Left ventricle myocardium inferior (tissue), 1 donor: ENCODE measurements at regions of chr12 and their contacts with region 1.

Region 1: GRCh38 chr12:9827209-9827888 is at the start of gene KLRF1:
- DNase-seq: no peak
- H3K4me3 ChIP-seq: no peak within 1 kb of the TSS
- H3K27ac ChIP-seq: no peak within 1 kb of the TSS
- H3K4me1 ChIP-seq: no peaks in the 10 kb centered on the region
- H3K27me3 ChIP-seq: no peaks in the 10 kb centered on the region
- CTCF ChIP-seq: no peak
- total RNA-seq, gene KLRF1: not detected

Region 2: GRCh38 chr12:9694241-9694640 is 133.1 kb before region 1 on chr12:
- intact Hi-C with region 1: no loop called
- DNase-seq: no peak
- H3K4me3 ChIP-seq: no peak overlapping the region
- H3K27ac ChIP-seq: no peak overlapping the region
- H3K4me1 ChIP-seq: peaks cover 8% of the 10 kb centered on the region
- H3K27me3 ChIP-seq: no peaks in the 10 kb centered on the region
- CTCF ChIP-seq: no peak

Region 3: GRCh38 chr12:9869307-9870161 is 42.2 kb after region 1 on chr12 and contains the start of gene CLEC2B:
- intact Hi-C with region 1: no loop called
- DNase-seq: no peak
- H3K4me3 ChIP-seq: peak within 1 kb of the TSS; percentile 63
- H3K27ac ChIP-seq: peak within 1 kb of the TSS; percentile 89
- H3K4me1 ChIP-seq: peaks cover 5% of the 10 kb centered on the region
- H3K27me3 ChIP-seq: no peaks in the 10 kb centered on the region
- CTCF ChIP-seq: no peak
- total RNA-seq, gene CLEC2B: 4.4 TPM

Region 4: GRCh38 chr12:9906873-9907272 is 79.5 kb after region 1 on chr12:
- intact Hi-C with region 1: loop called (anchors 5 kb)
- DNase-seq: no peak
- H3K4me3 ChIP-seq: no peak overlapping the region
- H3K27ac ChIP-seq: no peak overlapping the region
- H3K4me1 ChIP-seq: no peaks in the 10 kb centered on the region
- H3K27me3 ChIP-seq: no peaks in the 10 kb centered on the region
- CTCF ChIP-seq: no peak